ENCODE measurements at regions of chr6 and their contacts with region 1.

Region 1: GRCh38 chr6:119349323-119350042 is at the start of gene MAN1A1:
- DNase-seq: peak; percentile 91
- H3K4me3 Mint-ChIP-seq: peak within 1 kb of the TSS; percentile 89
- H3K27ac Mint-ChIP-seq: peak within 1 kb of the TSS; percentile 66
- H3K4me1 Mint-ChIP-seq: peaks cover 48% of the 10 kb centered on the region
- H3K27me3 Mint-ChIP-seq: no peaks in the 10 kb centered on the region
- total RNA-seq, gene MAN1A1: 21.6 to 22.0 TPM

Region 2: DNA sequence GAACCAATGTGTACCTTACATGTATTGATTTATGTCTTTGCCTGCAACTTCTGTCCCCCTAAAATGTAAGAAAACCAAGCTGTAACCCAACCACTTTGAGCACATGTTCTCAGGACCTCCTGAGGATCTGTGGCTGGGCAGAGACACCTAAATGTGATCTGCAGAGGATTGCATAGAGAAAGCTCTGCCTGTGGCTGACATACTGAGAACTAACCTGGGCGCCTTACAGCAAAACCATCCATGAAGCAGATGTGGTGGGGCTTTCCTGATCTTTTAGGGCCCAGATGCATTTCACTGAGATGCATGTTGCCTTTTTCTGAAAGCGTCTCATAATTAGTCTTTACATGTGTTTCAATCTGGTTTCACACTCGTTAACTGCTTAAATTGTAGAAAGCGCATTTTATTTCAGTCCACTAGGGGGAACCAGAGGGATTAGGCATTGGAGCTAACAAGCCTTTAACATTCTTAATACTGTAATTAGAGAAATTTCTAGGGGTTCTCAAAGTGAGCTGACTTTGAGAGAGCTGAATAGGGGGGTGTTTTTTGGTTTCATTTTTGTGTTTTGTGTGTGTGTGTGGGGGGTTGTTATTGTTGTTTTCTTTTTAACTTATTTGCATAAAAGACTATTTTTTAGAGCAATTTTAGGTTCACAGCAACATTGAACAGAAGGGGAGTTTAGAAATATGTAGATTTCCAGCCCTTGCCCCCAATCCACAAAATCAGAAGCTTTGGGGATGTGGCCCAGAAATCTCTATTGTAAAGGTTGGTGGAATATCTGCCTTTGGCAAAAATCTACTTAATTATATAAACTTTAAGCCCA is 220.1 kb before region 1 on chr6:
- CTCF ChIA-PET with region 1: interaction called, 10 read pairs
- POLR2A ChIA-PET with region 1: interaction called, 4 read pairs
- DNase-seq: no peak
- H3K4me3 Mint-ChIP-seq: no peak overlapping the region
- H3K27ac Mint-ChIP-seq: no peak overlapping the region
- H3K4me1 Mint-ChIP-seq: peaks cover 5% of the 10 kb centered on the region
- H3K27me3 Mint-ChIP-seq: peaks cover 2% of the 10 kb centered on the region

Region 3: DNA sequence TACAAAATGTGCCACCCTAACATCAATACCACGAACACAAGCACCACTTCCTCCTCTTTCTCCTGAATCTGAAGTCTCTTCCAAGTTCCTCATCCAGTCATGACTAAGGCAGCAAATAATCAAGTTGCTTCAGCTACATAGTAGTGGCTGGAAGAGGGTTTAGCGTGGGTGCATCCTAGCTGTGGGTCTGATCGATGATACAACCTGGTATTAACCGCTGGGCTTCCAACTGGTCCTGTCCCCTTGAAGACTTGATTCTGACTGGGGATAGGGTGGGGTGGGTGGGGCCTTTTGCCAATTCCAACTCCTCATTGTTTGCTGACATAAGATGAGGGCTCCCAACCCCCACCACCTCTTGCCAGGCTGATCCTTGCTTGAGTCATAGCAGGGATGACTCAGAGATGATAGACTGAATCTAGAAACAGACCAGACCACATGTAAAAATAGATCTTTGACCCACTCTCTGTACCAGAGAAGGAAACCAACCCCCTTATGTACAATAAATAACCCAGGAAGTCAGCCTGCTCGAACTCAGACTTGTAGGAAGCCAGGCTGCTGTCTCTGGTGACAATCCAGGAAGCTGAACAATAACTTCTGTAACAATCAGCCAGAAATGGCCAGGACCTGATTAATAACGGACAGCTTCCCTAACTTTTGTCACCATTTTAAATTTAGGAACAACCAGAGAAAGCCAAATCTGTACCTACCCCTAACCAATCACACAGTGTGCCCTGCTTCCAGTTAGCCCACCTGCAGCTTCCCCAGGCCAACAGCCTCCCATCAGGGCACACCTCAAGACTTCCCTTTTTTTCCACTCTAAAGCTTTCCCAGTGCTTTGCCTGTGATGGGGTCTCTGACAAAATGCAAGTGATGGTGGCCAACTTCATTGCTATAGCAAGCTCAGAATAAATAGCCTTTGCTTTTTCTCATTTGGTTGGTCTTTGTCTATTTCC is 202.1 kb before region 1 on chr6:
- CTCF ChIA-PET with region 1: interaction called, 17 read pairs
- POLR2A ChIA-PET with region 1: interaction called, 6 read pairs
- DNase-seq: peak; percentile 62
- H3K4me3 Mint-ChIP-seq: no peak overlapping the region
- H3K27ac Mint-ChIP-seq: peak overlapping the region; percentile 63
- H3K4me1 Mint-ChIP-seq: peaks cover 55% of the 10 kb centered on the region
- H3K27me3 Mint-ChIP-seq: peaks cover 4% of the 10 kb centered on the region

Region 4: GRCh38 chr6:119313937-119314884 is 35.3 kb before region 1 on chr6:
- CTCF ChIA-PET with region 1: interaction called, 15 read pairs
- POLR2A ChIA-PET with region 1: interaction called, 59 read pairs
- DNase-seq: peak; percentile 68
- H3K4me3 Mint-ChIP-seq: peak overlapping the region; percentile 31
- H3K27ac Mint-ChIP-seq: peak overlapping the region; percentile 93
- H3K4me1 Mint-ChIP-seq: peaks cover 73% of the 10 kb centered on the region
- H3K27me3 Mint-ChIP-seq: no peaks in the 10 kb centered on the region

Region 5: GRCh38 chr6:119322715-119323350 is 26.6 kb before region 1 on chr6:
- CTCF ChIA-PET with region 1: no interaction called
- POLR2A ChIA-PET with region 1: interaction called, 15 read pairs
- DNase-seq: peak; percentile 50
- H3K4me3 Mint-ChIP-seq: no peak overlapping the region
- H3K27ac Mint-ChIP-seq: peak overlapping the region; percentile 37
- H3K4me1 Mint-ChIP-seq: peaks cover 22% of the 10 kb centered on the region
- H3K27me3 Mint-ChIP-seq: no peaks in the 10 kb centered on the region

Region 6: DNA sequence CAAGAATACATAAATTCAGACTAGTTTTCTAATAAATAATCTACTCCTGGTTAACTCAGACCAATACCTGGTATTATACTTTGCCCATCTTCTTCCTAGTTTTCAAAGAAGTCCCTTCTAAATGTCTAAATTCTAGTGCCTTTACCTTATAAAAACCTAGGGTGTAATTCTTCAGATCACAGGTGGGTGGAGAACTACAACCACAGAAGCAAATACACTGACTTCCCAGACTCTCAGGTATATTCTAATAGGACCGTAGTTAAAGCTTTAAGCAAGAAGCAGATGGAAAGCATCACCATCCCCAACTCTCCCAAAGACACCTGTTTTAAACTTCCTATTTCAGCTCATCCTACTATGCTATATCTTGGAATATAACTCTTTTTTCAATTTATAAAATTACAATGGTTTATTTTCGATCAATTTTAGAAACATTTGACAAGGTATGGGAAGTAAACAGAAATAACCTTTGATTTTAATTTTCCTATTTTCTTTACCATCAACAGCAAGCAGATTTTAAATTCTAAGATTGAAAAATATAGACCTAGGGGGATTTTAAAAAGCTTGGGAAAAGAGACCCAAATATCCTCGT is 15.7 kb before region 1 on chr6:
- CTCF ChIA-PET with region 1: interaction called, 22 read pairs
- POLR2A ChIA-PET with region 1: interaction called, 43 read pairs
- DNase-seq: no peak
- H3K4me3 Mint-ChIP-seq: no peak overlapping the region
- H3K27ac Mint-ChIP-seq: no peak overlapping the region
- H3K4me1 Mint-ChIP-seq: peaks cover 57% of the 10 kb centered on the region
- H3K27me3 Mint-ChIP-seq: no peaks in the 10 kb centered on the region

Region 7: DNA sequence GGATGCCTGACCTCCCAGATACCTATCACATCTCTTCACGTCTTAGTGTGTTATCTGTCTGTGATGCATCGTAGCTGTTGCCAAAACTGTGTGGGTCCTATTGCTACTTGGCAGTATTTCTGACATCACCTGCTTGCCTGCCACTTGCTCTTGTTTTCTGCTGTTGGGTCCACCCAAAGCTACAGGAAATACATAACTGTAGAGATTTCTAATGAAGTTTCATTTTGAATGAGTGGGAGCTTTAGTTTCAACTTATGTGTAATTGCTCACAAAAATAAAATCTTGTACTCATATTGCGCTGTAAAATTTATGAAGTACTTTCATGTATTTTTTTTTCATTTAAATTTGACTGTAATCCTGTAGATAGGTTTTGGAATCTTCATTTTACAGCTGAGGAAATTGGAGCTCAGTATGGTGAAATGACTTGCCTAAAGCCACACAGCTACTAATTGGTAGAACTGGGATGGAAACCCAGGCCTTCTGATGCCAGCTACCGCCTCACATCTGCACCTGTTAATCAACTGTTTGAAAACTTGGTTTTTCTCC is 113.7 kb after region 1 on chr6:
- CTCF ChIA-PET with region 1: no interaction called
- POLR2A ChIA-PET with region 1: interaction called, 16 read pairs
- DNase-seq: peak; percentile 52
- H3K4me3 Mint-ChIP-seq: peak overlapping the region; percentile 40
- H3K27ac Mint-ChIP-seq: peak overlapping the region; percentile 93
- H3K4me1 Mint-ChIP-seq: peaks cover 63% of the 10 kb centered on the region
- H3K27me3 Mint-ChIP-seq: no peaks in the 10 kb centered on the region

Measured in activated CD4-positive, alpha-beta memory T cell treated with anti-CD3 and anti-CD28 coated beads, Interleukin-2, amount 10 ng/mL, durations not matched to agents 7 days and 5 days (primary cell).